H1 (cell line): ENCODE measurements at regions of chr16 and their contacts with region 1.

Region 1: GRCh38 chr16:74623214-74623842 is 16.4 kb upstream of the GLG1 start:
- DNase-seq: no peak
- H3K4me3 ChIP-seq: no peak overlapping the region
- H3K27ac ChIP-seq: no peak overlapping the region
- H3K4me1 ChIP-seq: peaks cover 0 to 5% (median 4%) of the 10 kb centered on the region in 4 experiments; a peak in 3 of 7 replicates
- H3K27me3 ChIP-seq: no peaks in the 10 kb centered on the region
- CTCF ChIP-seq: peak in 2 of 3 experiments; percentile 40 to 62; a peak in 2 of 4 replicates
- EP300 ChIP-seq: no peak
- POLR2A ChIP-seq: no peak
- RAD21 ChIP-seq: peak; percentile 67 to 71

Region 2: GRCh38 chr16:74469946-74470478 is 153.3 kb before region 1 on chr16:
- CTCF ChIA-PET with region 1: interaction called, 12 read pairs
- POLR2A ChIA-PET with region 1: no interaction called
- DNase-seq: no peak
- H3K4me3 ChIP-seq: no peak overlapping the region
- H3K27ac ChIP-seq: no peak overlapping the region
- H3K4me1 ChIP-seq: no peaks in the 10 kb centered on the region
- H3K27me3 ChIP-seq: no peaks in the 10 kb centered on the region
- CTCF ChIP-seq: peak in 1 of 3 experiments; percentile 6; a peak in 1 of 4 replicates
- EP300 ChIP-seq: no peak
- POLR2A ChIP-seq: no peak
- RAD21 ChIP-seq: no peak

Region 3: DNA sequence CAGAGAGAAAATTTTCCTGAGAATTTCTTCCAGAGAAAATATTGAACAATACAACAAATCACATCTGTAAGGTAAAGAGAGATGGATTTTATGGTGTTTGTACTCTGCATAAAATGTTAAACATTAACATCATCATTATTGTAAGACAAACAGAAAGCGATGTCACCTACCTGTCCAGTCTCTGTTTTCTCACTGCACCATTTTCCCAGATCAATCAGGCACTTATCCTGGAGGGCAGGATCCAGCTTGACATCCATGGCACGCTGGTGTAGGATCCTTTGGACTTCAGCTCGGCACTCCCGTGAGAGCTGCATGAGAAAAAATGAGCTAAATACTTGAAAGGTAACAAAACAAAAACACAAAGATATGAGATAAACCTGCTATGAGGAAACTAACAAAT is 146.1 kb before region 1 on chr16:
- CTCF ChIA-PET with region 1: interaction called, 19 read pairs
- POLR2A ChIA-PET with region 1: no interaction called
- DNase-seq: no peak
- H3K4me3 ChIP-seq: no peak overlapping the region
- H3K27ac ChIP-seq: no peak overlapping the region
- H3K4me1 ChIP-seq: no peaks in the 10 kb centered on the region
- H3K27me3 ChIP-seq: no peaks in the 10 kb centered on the region
- CTCF ChIP-seq: no peak
- EP300 ChIP-seq: no peak
- POLR2A ChIP-seq: no peak
- RAD21 ChIP-seq: no peak

Region 4: DNA sequence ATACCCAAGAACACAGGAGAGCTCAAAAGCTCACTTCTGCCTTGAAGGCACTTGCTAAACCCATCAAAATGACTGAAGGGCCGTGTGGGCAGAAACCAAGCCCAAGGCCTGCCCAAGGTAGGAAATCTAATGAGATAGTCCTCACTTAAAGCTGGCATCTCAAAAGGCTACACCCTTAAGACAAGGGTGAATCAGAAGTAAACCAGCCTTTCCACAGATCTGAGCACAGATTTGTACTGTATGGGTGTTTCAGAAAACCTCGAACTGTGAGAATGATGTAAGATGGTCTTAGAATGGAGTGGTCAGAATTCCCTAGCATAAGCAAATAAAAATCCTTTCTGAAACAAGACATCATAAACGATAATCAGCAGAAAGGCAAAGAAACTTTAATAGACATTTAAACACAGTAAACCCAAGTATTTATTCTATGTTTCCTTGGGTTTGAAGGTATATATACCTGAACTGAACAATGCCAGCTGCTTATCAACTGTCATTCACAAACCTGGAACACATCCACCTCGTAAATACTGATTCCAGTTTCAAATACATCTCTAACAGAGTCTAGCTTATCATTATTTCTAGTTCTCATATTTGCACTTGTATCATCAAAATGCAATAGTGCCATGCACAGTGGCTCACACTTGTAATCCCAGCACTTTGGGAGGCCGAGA is 54.2 kb before region 1 on chr16:
- CTCF ChIA-PET with region 1: no interaction called
- POLR2A ChIA-PET with region 1: no interaction called
- DNase-seq: no peak
- H3K4me3 ChIP-seq: no peak overlapping the region
- H3K27ac ChIP-seq: no peak overlapping the region
- H3K4me1 ChIP-seq: no peaks in the 10 kb centered on the region
- H3K27me3 ChIP-seq: no peaks in the 10 kb centered on the region
- CTCF ChIP-seq: no peak
- EP300 ChIP-seq: no peak
- POLR2A ChIP-seq: no peak
- RAD21 ChIP-seq: no peak

Region 5: DNA sequence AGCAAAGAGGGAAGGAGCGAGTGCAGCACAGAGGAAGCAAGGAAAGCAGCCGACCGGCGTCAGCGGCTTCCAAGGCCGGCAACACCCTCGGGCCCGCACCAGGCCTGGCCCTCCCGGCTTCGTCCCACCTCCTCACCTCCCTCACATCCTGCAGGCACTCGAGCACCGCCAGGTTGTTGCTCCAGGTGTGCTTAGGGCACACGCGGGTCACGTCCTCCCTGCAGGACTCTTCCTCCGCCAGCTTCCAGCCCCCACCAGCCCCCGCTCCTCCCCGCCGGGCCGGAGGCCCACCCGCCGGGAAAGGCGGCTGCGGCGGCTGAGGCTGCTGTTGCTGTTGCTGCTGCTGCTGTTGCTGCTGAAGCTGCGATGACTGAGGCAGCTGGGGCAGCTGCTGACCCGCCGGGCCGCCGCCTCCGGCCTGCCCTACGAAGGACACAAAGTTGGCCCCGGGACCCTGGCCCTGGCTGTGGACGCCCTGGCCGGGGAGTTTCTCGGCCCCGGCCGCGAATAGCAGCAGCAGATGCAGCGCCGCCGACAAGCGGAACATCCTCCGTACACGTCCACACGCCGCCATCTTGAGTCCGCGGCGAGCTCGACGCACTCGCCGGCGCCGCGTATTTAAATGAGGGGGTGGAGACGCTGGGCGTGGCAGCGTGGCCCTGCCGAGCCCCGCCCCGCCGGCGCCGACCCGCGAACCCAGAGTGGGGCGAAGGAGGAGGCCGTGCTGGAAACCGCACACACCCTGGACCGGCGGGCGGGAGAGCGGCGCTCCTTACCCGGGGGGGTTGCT is 16.6 kb before region 1 on chr16 and contains the start of gene GLG1:
- CTCF ChIA-PET with region 1: interaction called, 8 read pairs
- POLR2A ChIA-PET with region 1: interaction called, 27 read pairs
- DNase-seq: peak; percentile 74 to 88
- H3K4me3 ChIP-seq: peak within 1 kb of the TSS; percentile 71 to 92 (median 89)
- H3K27ac ChIP-seq: peak within 1 kb of the TSS; percentile 85
- H3K4me1 ChIP-seq: peaks cover 2 to 7% (median 6%) of the 10 kb centered on the region in 4 experiments; a peak in 5 of 7 replicates
- H3K27me3 ChIP-seq: no peaks in the 10 kb centered on the region
- CTCF ChIP-seq: no peak
- EP300 ChIP-seq: no peak
- POLR2A ChIP-seq: peak; percentile 89 to 92
- RAD21 ChIP-seq: peak in 1 of 2 experiments; percentile 6; a peak in 1 of 4 replicates
- total RNA-seq, gene GLG1: 137 and 139 TPM in 2 replicates